ENCODE measurements at regions of chr13 and their contacts with region 1.

Region 1: DNA sequence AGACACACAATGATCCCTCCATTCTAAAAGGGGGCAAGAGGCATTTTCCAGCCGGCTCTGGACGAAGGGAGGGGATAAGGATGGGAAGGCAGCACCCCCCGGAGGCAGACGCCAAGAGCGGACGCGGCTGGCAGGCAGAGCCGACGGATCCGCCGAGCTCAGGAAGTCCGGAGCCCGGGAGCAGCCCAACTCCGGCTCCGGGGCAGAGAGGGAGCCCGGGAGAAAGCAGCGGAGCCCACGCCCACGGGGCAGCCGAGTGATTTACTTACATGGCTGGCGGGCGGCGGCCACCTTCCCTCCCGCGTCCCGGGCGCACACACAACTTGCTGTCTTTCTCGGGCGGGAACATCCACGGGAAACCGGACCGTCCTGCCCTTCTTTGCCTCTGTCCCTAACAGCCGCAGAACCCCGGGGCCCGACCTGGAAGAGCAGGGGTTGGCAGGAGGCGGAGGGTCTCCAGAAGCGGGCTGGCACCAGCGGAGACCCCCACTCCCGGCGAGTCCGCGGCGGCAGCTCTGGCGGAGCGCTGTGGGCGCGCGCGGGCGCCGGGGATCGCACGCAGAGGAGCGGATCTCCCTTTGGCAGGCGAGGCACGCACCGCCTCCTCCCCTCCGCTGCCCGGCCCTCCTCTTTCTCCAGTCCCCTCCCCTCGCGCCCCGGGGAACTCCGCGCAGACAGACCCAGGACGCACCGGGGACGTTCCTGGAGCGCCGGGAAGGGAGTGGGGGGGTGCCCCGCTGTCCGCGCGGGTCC is at the start of gene LHFPL6:
- DNase-seq: peak; percentile 90
- ATAC-seq: peak; percentile 96
- H3K4me3 ChIP-seq: peak within 1 kb of the TSS; percentile 89
- H3K27ac ChIP-seq: peak within 1 kb of the TSS; percentile 87
- H3K4me1 ChIP-seq: peaks cover 8% of the 10 kb centered on the region
- H3K27me3 ChIP-seq: no peaks in the 10 kb centered on the region
- CTCF ChIP-seq: peak; percentile 45
- total RNA-seq, gene LHFPL6: 80.0 TPM

Region 2: GRCh38 chr13:39415008-39415802 is 187.6 kb before region 1 on chr13:
- intact Hi-C with region 1: loop called (anchors 10 kb)
- DNase-seq: no peak
- ATAC-seq: peak; percentile 85
- H3K4me3 ChIP-seq: no peak overlapping the region
- H3K27ac ChIP-seq: no peak overlapping the region
- H3K4me1 ChIP-seq: peaks cover 18% of the 10 kb centered on the region
- H3K27me3 ChIP-seq: no peaks in the 10 kb centered on the region
- CTCF ChIP-seq: peak; percentile 55